Activated CD4-positive, alpha-beta T cell treated with anti-CD3 and anti-CD28 coated beads for 36 hours (primary cell): ENCODE measurements at regions of chr1 and their contacts with region 1.

Region 1: GRCh38 chr1:212782422-212783154 is 9.0 kb downstream of the NSL1 start:
- DNase-seq: no peak
- ATAC-seq: peak; percentile 73
- H3K4me3 Mint-ChIP-seq: no peak overlapping the region
- H3K27ac Mint-ChIP-seq: no peak overlapping the region
- H3K4me1 Mint-ChIP-seq: peaks cover 27% of the 10 kb centered on the region
- H3K27me3 Mint-ChIP-seq: no peaks in the 10 kb centered on the region

Region 2: DNA sequence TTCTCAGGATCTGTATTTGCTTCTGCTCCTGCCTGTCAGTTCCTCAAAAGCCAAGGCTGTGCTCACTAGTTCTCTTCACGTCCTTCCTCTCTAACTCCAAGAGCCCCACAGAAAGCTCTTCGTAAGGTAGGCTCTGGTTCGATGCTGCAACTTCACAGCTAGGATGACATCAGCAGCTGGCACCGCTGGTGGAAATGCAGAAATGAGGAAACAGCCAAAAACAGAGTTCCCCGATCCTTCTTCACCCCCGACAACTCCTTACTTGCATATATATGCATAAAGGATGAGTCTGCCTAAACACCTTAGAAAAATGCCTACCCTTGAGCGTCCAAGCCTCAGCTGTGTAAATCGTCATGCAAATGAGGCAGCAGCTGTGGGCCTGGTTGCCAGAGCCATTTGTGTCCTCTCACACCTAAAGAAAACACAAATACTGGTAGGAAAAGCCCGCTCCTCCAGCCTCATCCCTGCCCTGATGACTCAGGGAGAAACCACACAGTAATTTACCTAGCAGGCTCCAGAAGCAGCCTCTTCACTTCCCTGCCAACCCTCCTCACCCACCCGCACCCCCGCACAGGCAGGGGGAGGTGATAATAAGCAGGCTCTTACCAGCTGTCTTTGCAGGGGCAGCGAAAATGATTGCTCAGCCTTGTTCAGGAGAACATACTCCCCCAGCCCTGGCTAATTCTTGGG is 111.1 kb before region 1 on chr1:
- CTCF ChIA-PET with region 1: interaction called, 88 read pairs
- POLR2A ChIA-PET with region 1: no interaction called
- intact Hi-C with region 1: no loop called
- DNase-seq: peak; percentile 38
- ATAC-seq: peak; percentile 68
- H3K4me3 Mint-ChIP-seq: no peak overlapping the region
- H3K27ac Mint-ChIP-seq: peak overlapping the region; percentile 18
- H3K4me1 Mint-ChIP-seq: peaks cover 20% of the 10 kb centered on the region
- H3K27me3 Mint-ChIP-seq: peaks cover 21% of the 10 kb centered on the region